ENCODE measurements at regions of chr5 and their contacts with region 1.

Region 1: GRCh38 chr5:159444441-159445082 is 114.3 kb upstream of the IL12B start:
- DNase-seq: peak; percentile 67
- CTCF ChIP-seq: peak; percentile 11

Region 2: GRCh38 chr5:159156426-159157238 is 287.9 kb before region 1 on chr5:
- in situ Hi-C with region 1: loop called (anchors 25 kb)
- DNase-seq: peak; percentile 57
- CTCF ChIP-seq: peak; percentile 79

Region 3: GRCh38 chr5:159915904-159916840 is 471.6 kb after region 1 on chr5 and contains the start of gene ADRA1B:
- in situ Hi-C with region 1: loop called (anchors 10 kb)
- DNase-seq: peak; percentile 86
- CTCF ChIP-seq: peak; percentile 56

Region 4: GRCh38 chr5:159987031-159987674 is 542.6 kb after region 1 on chr5:
- in situ Hi-C with region 1: loop called (anchors 10 kb)
- DNase-seq: peak; percentile 89
- CTCF ChIP-seq: peak; percentile 76

Region 5: GRCh38 chr5:160175438-160176218 is 731.1 kb after region 1 on chr5:
- in situ Hi-C with region 1: no loop called
- DNase-seq: no peak
- CTCF ChIP-seq: no peak

Measured in GM13976 (cell line).